BJ (cell line): ENCODE measurements at regions of chr18 and their contacts with region 1.

Region 1: GRCh38 chr18:63320046-63320689 is 599 bp upstream of the BCL2 start:
- DNase-seq: no peak
- H3K4me3 ChIP-seq: peak overlapping the region; percentile 33
- H3K27me3 ChIP-seq: peaks cover 12% of the 10 kb centered on the region
- CTCF ChIP-seq: no peak

Region 2: DNA sequence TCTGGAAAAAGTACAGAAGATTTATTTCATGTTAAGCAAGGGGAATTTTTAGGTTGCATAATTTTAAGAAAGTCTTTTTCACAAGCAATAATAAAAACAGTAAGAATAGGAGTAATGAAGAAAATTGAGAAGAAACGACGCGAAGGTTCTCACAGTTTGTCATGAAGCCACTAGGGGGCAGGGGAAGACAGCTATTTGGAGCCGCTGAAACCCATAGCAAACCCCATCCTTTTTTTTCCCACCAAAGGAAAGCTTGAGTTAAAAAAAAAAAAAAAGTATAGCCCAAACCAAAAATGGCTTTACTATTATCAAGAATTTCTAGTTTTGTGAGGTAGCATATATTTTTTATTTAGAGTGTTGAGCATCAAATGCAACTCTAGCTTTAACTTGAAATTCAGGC is 303.9 kb before region 1 on chr18:
- CTCF ChIA-PET with region 1: interaction called, 17 read pairs
- POLR2A ChIA-PET with region 1: no interaction called
- DNase-seq: peak; percentile 7
- H3K4me3 ChIP-seq: no peak overlapping the region
- H3K27me3 ChIP-seq: peaks cover 8% of the 10 kb centered on the region
- CTCF ChIP-seq: peak; percentile 80

Region 3: DNA sequence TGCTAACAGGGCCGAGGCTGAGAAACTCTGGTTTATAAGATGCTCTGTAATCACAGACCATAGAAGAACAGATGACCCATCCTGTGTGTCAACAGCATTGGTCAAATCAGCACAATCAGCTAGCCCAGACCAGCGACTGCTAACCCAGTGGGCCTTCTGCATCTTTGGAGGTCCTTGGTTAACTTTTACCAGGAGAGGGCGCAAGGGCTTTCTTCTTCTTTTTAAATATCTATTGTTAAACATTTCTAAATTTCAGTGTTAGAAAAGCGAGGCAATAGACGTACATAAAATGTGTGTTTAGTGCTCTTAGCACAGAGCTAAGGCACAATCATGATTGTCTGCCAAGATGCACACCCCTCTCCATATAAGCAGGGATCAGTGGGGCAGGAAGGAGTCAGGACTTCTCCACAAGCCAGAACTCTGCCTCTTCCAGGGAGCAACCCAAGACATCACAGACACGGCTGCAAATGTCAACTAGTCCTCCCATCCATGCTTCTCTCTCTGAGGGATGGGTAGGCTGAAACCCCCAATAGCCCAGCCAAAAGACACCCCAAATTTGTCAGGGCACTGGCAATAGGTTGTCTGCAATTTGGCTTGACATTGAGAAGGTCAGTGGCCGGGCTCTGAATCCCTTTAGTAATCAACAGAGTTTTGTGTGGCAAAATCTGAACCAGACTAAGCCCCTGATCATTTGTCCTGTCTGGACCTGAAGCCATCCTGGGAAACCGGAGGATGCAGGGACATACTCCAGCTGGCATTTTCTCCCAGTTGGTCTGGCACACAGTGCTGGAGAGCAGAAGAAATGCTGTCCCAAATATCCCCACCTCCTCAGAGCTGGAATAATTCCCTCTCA is 188.8 kb before region 1 on chr18:
- CTCF ChIA-PET with region 1: interaction called, 76 read pairs
- POLR2A ChIA-PET with region 1: no interaction called
- DNase-seq: peak; percentile 3
- H3K4me3 ChIP-seq: no peak overlapping the region
- H3K27me3 ChIP-seq: peaks cover 7% of the 10 kb centered on the region; the same call in 1 of the 2 replicates
- CTCF ChIP-seq: peak; percentile 67

Region 4: GRCh38 chr18:63141778-63142176 is 178.4 kb before region 1 on chr18:
- CTCF ChIA-PET with region 1: interaction called, 12 read pairs
- POLR2A ChIA-PET with region 1: no interaction called
- DNase-seq: no peak
- H3K4me3 ChIP-seq: no peak overlapping the region
- H3K27me3 ChIP-seq: peaks cover 7% of the 10 kb centered on the region
- CTCF ChIP-seq: no peak